CD4-positive, alpha-beta memory T cell (primary cell): ENCODE measurements at regions of chr11 and their contacts with region 1.

Region 1: DNA sequence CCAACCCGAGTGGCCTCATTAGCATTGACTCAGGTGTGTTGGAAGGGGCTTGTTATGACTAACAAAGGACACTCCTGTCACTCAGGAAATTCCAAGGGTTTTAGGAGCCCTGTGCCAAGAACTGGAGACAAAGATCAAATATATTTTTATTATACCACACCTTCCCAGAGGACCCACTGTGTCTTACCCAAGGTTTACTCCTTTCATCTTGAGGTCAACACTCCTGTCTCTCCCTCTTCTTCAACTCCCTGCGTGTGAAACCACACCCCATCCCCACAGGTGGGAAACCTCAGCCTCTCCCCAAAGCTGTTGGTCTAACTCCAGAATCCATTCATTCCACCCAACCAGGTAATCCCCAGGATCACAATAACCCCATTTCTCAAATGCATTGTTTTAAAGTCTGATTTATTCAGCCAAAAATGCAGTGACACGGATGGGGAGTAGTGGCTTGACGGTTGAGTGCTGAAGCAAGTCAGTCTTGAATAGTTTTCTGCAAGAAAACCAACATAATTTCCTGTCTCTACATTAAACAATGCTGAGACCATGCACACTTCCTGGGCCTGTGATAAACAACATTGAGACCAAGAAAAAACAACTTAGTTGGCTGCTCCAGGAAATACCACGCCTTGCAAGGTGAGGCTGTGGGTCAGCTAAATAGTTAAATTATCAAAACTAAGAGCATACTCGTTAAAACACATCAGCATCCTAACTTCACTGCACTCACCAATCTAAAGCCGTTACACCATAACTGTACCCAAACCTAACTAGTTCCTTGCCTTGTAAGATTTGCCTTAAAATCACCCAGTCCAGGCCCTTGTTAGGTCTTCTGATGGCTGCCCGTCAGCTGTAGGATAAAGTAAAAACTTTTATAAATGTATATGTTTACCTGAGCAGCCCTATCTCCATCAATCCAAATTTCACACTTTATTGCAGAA is 38.5 kb upstream of the SPON1 start:
- DNase-seq: peak; percentile 37 to 66 (median 50)
- H3K4me3 ChIP-seq: peak overlapping the region in 1 of 2 donors; percentile 31
- H3K4me3 Mint-ChIP-seq: peak overlapping the region; percentile 15 to 92 (median 84)
- H3K27ac ChIP-seq: peak overlapping the region; percentile 46
- H3K27ac Mint-ChIP-seq: peak overlapping the region; percentile 95 to 99 (median 96)
- H3K4me1 ChIP-seq: peaks cover 59% of the 10 kb centered on the region
- H3K4me1 Mint-ChIP-seq: peaks cover 54 to 85% (median 65%) of the 10 kb centered on the region in 4 donors
- H3K27me3 ChIP-seq: no peaks in the 10 kb centered on the region
- H3K27me3 Mint-ChIP-seq: no peaks in the 10 kb centered on the region

Region 2: DNA sequence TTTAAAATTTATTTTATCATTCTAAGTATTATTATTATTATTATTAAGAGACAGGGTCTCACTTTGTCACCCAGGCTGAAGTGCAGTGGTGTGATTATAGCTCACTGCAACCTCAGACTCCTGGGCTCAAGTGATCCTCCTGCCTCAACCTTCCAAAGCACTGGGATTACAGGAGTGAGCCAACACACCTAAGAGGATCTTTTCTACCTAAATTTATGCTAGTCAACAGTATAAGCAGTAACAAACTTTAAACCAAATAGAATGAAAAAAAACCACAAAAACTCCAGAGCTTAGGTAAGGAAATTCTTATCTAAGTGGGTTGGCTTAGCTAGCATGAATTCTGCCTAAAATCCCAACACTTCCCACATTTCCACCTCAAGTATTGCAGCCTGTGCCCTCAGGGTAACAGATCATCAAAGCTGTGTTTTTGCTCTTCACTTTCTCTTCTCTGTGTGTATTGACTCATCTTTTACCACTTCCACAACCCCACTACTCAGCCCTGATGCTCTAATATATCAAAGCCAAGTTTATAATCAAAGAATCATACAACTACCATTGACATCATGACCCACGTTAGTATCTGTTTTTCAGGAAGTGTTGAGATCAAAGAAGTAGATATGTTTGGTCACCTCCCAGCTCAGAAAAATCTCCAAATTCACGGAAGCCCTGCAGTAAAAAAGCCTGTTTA is 55.1 kb before region 1 on chr11:
- CTCF ChIA-PET with region 1: interaction called, 6 read pairs
- POLR2A ChIA-PET with region 1: interaction called, 78 read pairs
- intact Hi-C with region 1: loop called (anchors 2 kb)
- DNase-seq: peak; percentile 80 to 91 (median 84)
- H3K4me3 ChIP-seq: no peak overlapping the region
- H3K4me3 Mint-ChIP-seq: peak overlapping the region in 7 of 8 donors; percentile 1 to 56 (median 43)
- H3K27ac ChIP-seq: peak overlapping the region; percentile 55
- H3K27ac Mint-ChIP-seq: peak overlapping the region; percentile 77 to 97 (median 96)
- H3K4me1 ChIP-seq: peaks cover 32% of the 10 kb centered on the region
- H3K4me1 Mint-ChIP-seq: peaks cover 30 to 49% (median 35%) of the 10 kb centered on the region in 4 donors
- H3K27me3 ChIP-seq: no peaks in the 10 kb centered on the region
- H3K27me3 Mint-ChIP-seq: no peaks in the 10 kb centered on the region

Region 3: DNA sequence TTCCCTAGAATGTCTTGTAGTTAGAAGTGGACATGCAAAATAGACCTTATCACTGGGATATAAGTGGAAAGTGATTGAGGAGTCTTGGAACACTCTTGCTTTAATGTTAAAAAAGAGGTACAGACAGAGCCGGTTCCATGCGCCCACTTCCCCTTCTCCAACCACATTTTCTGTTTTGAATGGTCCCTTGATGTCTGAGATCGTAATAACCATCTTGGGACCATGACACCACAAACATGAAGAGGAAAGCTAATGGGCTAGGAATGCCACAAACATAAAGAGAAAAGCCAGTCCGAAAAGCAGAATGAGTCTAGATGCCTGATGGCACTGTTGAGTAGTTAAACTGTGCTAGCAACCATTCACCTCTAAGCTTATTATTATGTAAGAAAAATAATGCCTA is 16.3 kb before region 1 on chr11:
- CTCF ChIA-PET with region 1: interaction called, 4 read pairs
- POLR2A ChIA-PET with region 1: interaction called, 4 read pairs
- intact Hi-C with region 1: loop called (anchors 2 kb)
- DNase-seq: no peak
- H3K4me3 ChIP-seq: no peak overlapping the region
- H3K4me3 Mint-ChIP-seq: no peak overlapping the region
- H3K27ac ChIP-seq: no peak overlapping the region
- H3K27ac Mint-ChIP-seq: no peak overlapping the region
- H3K4me1 ChIP-seq: no peaks in the 10 kb centered on the region
- H3K4me1 Mint-ChIP-seq: peaks cover 0 to 4% (median 2%) of the 10 kb centered on the region in 4 donors
- H3K27me3 ChIP-seq: no peaks in the 10 kb centered on the region
- H3K27me3 Mint-ChIP-seq: peaks cover 0 to 2% of the 10 kb centered on the region in 2 donors